Posterior vena cava (tissue), 2 donors: ENCODE measurements at regions of chr1 and their contacts with region 1.

Region 1: DNA sequence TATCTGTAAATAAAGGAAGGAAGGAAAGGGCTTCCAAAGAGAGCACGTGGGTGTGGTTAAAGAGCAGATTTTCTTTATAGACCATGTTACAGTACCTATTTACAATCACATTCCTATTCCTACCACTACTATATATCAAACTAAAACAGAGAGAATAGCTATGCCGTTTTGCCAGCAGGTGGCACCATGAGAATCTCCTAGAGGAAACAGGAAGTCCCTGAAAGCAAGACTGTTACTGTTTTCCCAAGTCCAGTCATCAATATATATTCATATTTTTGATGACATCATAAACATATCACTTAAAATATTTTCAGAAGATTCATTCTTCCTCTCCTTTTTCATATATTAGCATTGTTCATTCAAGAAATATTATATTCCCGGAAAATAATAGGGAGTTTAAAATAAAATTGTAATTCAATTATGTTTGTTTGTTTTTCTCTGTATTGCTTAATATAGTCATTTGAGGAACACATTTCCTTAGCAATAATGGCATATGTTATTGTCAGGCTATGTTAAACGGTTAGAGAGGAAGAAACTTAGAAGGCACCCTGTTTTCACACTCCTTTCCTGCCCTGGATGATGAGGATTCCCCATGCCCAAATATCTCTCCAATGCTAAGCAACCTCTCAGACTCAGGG is 6.6 kb downstream of the CCDC190 start:
- DNase-seq: no peak

Region 2: GRCh38 chr1:162612606-162613400 is 241.6 kb before region 1 on chr1:
- intact Hi-C with region 1: no loop called
- DNase-seq: peak; percentile 86

Region 3: DNA sequence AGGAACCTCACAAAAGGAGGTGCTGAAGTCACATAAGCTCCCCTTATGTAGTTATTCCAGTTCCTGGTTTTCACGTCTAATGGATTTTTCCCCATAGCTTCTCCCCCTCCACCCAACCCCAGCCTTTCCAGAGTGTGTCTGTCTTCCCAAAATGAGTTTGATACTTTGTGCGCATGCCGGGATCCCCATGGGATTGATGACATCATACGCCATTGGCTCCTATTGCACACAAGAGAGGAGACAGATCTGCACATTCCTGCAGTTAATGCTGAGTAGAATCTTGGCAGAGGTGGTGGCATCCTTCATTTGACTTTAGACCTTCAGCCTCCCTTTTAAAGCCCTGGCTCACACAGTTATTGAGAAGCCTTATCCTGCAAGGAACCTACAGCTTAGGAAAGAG is 150.7 kb before region 1 on chr1:
- intact Hi-C with region 1: no loop called
- DNase-seq: peak; percentile 84

Region 4: DNA sequence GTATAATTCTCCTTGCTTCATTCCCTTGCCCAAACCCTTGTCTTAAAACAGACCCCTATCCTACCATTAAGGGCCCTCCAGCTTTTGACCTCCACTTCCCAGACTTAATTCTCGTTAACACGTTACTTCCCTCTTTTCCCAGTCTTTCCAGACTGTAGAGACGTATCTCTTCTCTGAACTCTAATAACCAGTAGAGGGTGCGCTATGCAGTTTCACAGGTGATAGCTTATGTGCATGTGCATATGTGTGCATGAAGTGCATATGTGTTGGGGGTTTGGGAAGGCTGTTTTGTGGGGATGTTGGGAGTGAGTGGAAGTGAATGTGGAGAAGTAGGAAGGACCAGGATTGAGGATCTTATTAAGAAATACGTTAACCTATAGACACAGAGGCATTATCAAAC is 84.7 kb after region 1 on chr1:
- intact Hi-C with region 1: no loop called
- DNase-seq: no peak

Region 5: GRCh38 chr1:163013826-163014600 is 159.6 kb after region 1 on chr1:
- intact Hi-C with region 1: no loop called
- DNase-seq: no peak

Region 6: DNA sequence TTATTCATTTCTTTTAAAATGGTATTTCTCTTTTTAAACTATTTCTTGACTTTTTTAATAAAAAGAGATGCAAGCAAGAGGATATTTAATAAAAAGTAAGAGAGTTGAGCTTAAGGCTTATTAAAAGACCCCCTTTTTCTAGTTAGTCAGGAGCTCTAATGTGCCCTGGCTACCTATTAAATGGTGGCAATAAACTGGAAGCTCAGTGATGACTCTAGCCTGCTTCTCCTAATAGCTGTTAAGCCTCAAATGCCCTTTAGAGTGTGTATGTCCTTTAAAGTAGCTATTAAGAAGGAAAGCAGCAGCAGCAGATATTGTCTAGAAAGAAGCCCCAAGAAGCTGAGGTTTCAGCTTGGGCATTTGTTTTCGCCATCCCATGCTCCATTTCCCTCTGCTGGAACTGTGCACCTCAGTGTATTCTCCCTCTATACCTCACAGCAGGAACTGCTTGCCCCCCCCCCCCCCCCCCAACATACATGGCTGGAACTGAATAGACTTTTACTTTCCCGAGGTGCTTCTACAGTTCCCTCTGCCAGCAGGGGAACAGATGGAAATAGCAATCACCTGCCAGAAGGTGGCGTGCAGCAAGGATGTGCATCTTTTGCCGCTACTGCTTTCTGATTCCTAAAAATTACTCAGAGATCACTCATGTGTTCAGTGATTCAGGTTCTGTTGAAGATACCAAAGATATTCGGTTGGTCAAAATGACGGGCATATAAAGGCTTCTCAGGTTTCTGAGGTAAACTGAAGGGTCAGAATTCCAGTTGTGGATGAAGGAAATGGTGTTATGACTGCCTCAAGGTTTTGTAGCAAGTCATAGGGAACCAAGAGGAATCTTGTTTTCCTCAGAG is 217.3 kb after region 1 on chr1:
- intact Hi-C with region 1: loop called in 1 of 2 experiments (anchors 10 kb)
- DNase-seq: peak; percentile 82